ENCODE measurements at regions of chr11 and their contacts with region 1.

Region 1: DNA sequence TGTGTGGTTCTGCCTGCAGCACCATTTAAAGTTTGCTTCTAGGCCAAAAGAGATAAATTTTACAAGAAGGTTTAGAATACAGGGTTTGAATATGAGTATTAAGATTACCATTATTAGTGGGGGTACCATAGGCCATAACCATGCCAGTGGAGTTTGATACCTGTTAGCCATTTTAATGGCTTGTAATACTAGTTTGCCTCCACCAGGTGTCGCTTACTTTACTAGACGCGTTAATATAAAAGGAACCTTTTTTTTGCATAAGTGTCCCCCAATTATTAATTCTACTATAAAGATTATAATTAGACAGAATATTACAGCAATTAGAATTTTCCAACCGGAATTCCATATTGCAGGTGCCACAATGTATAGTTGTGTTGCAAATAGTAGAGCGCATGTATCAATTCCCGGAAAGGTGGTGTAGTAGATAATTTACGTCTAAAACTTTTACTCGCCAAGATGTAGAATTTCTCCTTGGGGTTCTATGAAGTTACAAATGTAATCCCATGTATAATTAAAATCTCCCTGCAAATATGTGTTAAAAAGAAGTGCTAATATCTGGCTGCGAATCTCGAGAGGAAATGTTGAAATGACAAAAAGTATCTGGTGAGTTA is 16.1 kb downstream of the MS4A6E start:
- DNase-seq: peak; percentile 42
- H3K4me3 ChIP-seq: no peak overlapping the region
- H3K27ac ChIP-seq: no peak overlapping the region
- H3K4me1 ChIP-seq: no peaks in the 10 kb centered on the region
- H3K27me3 ChIP-seq: no peaks in the 10 kb centered on the region
- CTCF ChIP-seq: peak; percentile 82

Region 2: GRCh38 chr11:60265373-60266214 is 77.6 kb before region 1 on chr11:
- CTCF ChIA-PET with region 1: no interaction called
- POLR2A ChIA-PET with region 1: no interaction called
- intact Hi-C with region 1: loop called (anchors 5 kb)
- DNase-seq: peak; percentile 70
- H3K4me3 ChIP-seq: no peak overlapping the region
- H3K27ac ChIP-seq: no peak overlapping the region
- H3K4me1 ChIP-seq: no peaks in the 10 kb centered on the region
- H3K27me3 ChIP-seq: peaks cover 14% of the 10 kb centered on the region
- CTCF ChIP-seq: peak; percentile 74

Measured in A673 (cell line).